Endothelial cell of umbilical vein (primary cell): ENCODE measurements at regions of chr15 and their contacts with region 1.

Region 1: DNA sequence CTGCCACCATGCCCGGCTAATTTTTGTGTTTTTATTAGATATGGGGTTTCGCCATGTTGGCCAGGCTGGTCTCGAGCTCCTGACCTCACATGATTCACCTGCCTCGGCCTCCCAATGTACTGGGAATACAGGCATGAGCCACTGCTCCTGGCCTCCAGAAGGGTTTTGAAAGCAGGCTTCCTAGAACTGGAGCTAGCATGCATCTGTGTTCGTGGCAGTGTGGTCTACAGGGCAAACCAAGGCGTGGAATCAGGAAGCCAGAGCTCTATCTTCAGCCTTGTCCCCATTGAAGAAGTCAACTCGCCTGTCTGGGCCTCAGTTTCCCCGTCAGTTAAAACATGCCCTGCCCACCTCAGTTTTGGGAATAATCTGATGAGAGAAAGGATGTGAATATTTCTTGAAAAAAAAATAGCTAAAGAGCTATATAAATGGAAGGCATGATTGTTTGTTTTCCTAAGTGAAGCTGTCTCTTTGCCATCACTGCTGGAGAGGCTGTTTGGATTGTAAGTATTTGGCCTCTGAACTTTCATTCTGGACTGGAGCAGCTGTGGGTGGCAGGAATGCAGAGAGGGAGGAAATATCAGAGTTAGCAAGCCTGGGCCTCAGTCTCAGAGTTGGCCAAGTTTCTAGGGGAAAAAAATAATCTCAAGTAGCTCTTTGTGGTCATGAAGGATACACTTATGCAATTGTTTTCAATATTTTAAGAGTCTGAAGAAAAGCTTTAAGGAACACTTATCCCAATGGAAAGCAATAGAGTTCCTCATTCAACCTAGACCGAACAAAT is 36.5 kb upstream of the UACA start:
- DNase-seq: peak; percentile 94
- H3K4me3 ChIP-seq: no peak overlapping the region
- H3K27ac ChIP-seq: peak overlapping the region; percentile 66
- H3K4me1 ChIP-seq: peaks cover 33% of the 10 kb centered on the region
- H3K27me3 ChIP-seq: no peaks in the 10 kb centered on the region
- CTCF ChIP-seq: no peak
- POLR2A ChIP-seq: no peak

Region 2: GRCh38 chr15:70778258-70779076 is 21.4 kb before region 1 on chr15:
- CTCF ChIA-PET with region 1: no interaction called
- POLR2A ChIA-PET with region 1: no interaction called
- dilution Hi-C with region 1: no loop called
- intact Hi-C with region 1: loop called (anchors 1 kb)
- DNase-seq: peak; percentile 45
- H3K4me3 ChIP-seq: no peak overlapping the region
- H3K27ac ChIP-seq: peak overlapping the region; percentile 68
- H3K4me1 ChIP-seq: peaks cover 36% of the 10 kb centered on the region
- H3K27me3 ChIP-seq: no peaks in the 10 kb centered on the region
- CTCF ChIP-seq: no peak
- POLR2A ChIP-seq: no peak